ENCODE measurements at regions of chr12 and their contacts with region 1.

Region 1: DNA sequence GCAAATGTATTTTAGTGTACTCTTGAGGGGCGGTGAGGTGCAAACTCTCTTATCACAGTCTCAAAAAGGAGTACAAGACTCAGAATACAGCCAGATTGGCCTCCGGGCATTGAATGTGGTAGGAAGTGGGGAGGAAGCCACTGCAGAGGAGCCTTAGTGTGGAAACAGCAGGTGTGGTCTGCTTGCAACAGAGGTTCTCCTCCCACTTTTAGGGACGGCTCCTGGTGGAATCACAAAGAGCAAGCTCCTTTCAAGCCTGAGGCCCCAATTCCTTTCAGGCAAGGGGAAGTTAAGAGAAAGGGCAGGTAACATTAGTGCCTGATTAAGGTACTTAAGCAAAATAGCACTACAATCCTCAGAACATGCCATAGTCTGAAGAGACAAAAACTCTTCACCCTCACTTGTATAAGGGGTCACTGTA is 23.7 kb upstream of the SLC2A3 start:
- DNase-seq: peak; percentile 38
- CTCF ChIP-seq: no peak

Region 2: GRCh38 chr12:7758758-7759140 is 201.0 kb before region 1 on chr12:
- CTCF ChIA-PET with region 1: no interaction called
- POLR2A ChIA-PET with region 1: no interaction called
- DNase-seq: no peak
- CTCF ChIP-seq: no peak

Region 3: GRCh38 chr12:7905071-7905470 is 54.6 kb before region 1 on chr12:
- CTCF ChIA-PET with region 1: no interaction called
- POLR2A ChIA-PET with region 1: no interaction called
- DNase-seq: no peak
- CTCF ChIP-seq: no peak

Region 4: DNA sequence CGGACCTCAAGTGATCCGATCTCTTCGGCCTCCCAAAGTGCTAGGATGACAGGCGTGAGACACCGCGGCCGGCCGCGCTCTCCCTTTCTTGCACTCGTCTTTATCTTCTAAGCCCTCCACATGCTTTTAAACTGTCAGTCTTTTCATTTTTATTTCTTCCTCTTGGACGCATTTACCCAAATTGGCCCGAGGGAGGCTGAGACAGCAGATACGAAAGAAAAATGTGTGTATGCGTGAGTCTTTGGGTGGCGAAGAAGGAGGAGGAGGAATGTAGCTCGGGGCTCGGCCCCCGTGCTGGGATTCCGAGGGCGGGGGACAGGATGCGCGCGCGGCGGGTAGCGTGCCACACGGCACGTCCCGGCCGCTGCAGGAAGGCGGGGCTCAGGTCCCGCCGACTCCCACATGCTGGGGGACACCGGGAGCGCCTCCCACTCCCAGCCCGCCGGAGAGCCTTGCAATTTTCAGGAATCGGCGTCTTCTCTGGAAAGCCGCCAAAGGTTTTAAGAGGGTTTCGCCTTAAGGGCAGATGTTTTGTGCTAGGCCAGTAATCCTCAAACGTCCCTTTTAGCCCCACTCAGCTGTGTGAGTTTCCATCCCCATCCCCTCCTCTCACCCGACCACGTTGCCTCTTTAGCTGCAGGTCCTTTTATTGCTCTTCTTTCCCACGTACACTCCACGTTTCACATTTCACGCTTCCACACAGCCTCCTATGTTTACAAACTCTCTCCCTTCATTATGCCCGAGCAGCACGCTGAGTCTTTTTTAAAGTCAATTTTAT is 11.0 kb after region 1 on chr12:
- CTCF ChIA-PET with region 1: interaction called, 20 read pairs
- POLR2A ChIA-PET with region 1: no interaction called
- DNase-seq: peak; percentile 87
- CTCF ChIP-seq: no peak

Region 5: GRCh38 chr12:8045952-8046944 is 86.5 kb after region 1 on chr12:
- CTCF ChIA-PET with region 1: no interaction called
- POLR2A ChIA-PET with region 1: no interaction called
- DNase-seq: peak; percentile 84
- CTCF ChIP-seq: peak; percentile 79

Measured in GM10248 (cell line).